Cardiac septum (tissue), 1 donor: ENCODE measurements at regions of chr1 and their contacts with region 1.

Region 1: GRCh38 chr1:27341525-27342252 is at the start of gene SYTL1:
- DNase-seq: peak; percentile 85
- total RNA-seq, gene SYTL1: 0.65 TPM

Region 2: GRCh38 chr1:27306892-27307761 is 34.6 kb before region 1 on chr1:
- intact Hi-C with region 1: loop called (anchors 5 kb)
- DNase-seq: no peak

Region 3: DNA sequence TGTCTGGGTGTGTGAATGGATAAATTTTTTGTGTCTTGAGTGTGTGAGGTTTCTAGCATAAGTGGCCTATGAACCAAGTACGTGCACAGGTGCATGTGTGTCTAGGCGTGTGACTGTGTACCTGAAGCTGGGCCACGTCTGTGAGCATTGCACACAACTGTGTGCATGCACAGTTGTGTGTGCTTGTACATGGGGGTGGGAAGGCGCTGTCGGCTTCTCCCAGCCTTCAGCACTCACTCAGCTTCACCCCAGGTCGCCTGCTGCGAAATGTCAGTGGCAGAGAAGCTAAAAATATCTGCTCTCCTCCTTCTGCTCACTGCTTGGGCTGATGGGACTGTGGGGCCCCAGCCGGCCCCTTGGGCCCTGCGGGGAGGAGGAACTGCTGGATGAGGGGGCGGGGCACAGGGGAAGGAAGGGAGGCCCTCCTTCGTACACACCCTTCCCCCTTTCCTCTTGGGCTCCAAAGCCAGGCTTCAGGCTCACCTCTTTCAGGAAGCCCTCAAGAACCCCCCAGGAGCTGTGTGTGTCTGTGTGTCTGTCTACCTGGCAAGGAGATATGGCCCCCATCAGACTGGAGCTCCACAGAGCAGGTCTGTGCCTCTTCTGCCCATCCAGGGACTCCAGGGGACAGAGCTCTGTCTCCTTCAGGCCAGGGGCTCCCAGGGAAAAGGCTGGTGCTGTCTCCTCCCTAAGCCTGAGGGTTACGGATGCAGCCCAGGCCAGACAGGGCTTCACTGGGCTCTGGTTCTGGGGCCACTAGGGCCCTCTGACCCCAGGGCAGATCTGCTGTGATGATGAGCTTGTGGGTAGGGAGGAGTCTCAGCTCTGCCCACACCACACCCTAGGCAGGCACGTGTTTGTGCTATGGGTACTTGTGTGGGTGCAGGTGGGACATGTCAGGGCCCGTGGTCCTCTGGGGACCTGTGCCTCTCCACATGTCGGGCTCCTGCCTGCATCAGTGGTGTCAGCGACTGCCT is 183.9 kb after region 1 on chr1:
- intact Hi-C with region 1: no loop called
- DNase-seq: peak; percentile 92

Region 4: GRCh38 chr1:27934818-27935549 is 593.3 kb after region 1 on chr1 and contains the start of gene SMPDL3B:
- intact Hi-C with region 1: no loop called
- DNase-seq: no peak
- total RNA-seq, gene SMPDL3B: not detected